ENCODE measurements at regions of chr12 and their contacts with region 1.

Region 1: DNA sequence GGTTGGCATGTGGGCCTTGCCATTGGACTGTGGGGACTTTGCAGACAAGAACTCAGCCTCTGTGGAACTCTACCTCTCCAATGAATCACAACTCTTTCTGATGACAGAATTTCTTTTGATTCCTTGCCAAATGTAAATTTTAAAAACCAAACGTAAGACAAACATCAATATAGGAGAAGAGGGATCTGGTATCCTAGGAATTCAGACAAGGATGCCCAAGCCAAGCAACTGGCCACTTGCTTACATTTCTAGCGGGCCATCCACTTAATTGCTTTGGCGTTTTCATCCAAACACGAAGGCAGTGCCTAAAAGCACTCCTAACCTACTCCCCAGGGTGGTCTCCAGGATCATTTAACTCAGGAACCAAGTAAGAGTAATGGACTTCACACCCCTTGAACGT is 23.4 kb upstream of the RAB35 start:
- DNase-seq: no peak
- ATAC-seq: no peak
- H3K4me3 ChIP-seq: no peak overlapping the region
- H3K27ac ChIP-seq: no peak overlapping the region
- H3K4me1 ChIP-seq: no peaks in the 10 kb centered on the region
- H3K27me3 ChIP-seq: no peaks in the 10 kb centered on the region
- CTCF ChIP-seq: no peak

Region 2: GRCh38 chr12:120175062-120175461 is 35.1 kb after region 1 on chr12:
- intact Hi-C with region 1: loop called in 1 of 2 experiments (anchors 5 kb)
- DNase-seq: no peak
- ATAC-seq: no peak
- H3K4me3 ChIP-seq: no peak overlapping the region
- H3K27ac ChIP-seq: no peak overlapping the region
- H3K4me1 ChIP-seq: no peaks in the 10 kb centered on the region
- H3K27me3 ChIP-seq: no peaks in the 10 kb centered on the region
- CTCF ChIP-seq: no peak

Region 3: DNA sequence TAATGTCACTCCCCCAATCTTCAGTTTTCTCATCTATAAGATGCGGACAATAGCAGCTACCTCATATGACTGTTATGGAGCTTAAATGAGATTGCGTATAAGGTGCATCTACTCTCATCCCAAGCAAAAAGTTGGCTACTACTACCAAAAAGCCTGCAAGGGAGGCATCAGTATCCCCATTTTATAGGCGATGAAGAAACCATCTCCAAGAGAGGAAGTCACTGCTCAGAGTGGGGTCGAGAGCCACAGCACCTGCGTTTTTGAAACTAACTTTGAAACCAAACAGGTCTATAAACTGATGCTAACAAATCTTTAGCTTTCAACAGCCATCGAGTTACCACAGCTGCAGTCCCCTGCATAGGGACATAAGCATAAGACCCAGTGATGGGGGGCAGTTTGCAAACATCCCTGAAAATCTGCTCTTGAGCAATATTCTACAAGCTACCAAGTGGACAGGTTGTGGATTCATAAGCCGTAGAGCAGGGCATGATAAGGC is 51.1 kb after region 1 on chr12:
- intact Hi-C with region 1: no loop called
- DNase-seq: no peak
- ATAC-seq: no peak
- H3K4me3 ChIP-seq: no peak overlapping the region
- H3K27ac ChIP-seq: no peak overlapping the region
- H3K4me1 ChIP-seq: peaks cover 25% of the 10 kb centered on the region
- H3K27me3 ChIP-seq: no peaks in the 10 kb centered on the region
- CTCF ChIP-seq: no peak

Region 4: GRCh38 chr12:120640840-120641833 is 501.2 kb after region 1 on chr12:
- intact Hi-C with region 1: no loop called
- DNase-seq: peak; percentile 58 to 74
- ATAC-seq: peak; percentile 74 to 90 (median 84)
- H3K4me3 ChIP-seq: peak overlapping the region; percentile 65
- H3K27ac ChIP-seq: no peak overlapping the region
- H3K4me1 ChIP-seq: peaks cover 6% of the 10 kb centered on the region
- H3K27me3 ChIP-seq: peaks cover 0 to 47% (median 4%) of the 10 kb centered on the region in 3 donors
- CTCF ChIP-seq: no peak

Measured in psoas muscle (tissue), 8 donors.